HEK293 (cell line): ENCODE measurements at regions of chr10 and their contacts with region 1.

Region 1: DNA sequence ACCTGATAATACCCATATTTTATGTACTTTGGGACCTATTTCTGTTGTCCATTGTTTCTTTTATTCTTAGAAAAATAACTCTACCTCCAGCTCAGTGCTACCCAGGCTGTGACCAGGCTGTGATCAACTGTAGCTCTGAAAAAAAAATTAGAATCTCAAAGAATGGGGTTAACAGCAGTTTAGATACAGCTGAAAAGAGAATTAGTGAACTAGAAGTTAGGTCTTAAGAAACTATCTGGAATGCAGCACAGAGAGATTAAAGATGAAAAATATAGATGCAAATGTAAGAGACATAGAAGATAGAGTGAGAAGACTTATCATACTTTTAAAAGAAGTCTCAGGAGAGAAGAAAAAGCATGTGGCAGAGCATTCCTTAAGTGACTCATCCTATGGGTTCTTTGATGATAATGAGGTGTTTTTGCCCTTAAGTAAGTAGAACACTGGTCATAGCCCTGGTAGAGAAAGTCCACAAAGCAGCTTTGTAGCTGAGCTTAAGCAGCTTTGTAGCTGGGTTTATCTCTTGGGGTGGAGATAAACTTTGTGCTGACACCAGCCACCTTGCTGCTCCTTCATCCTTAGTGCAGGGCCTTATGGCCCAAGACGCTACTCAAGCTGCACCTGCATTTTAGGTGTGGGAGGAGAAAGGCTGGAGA is 27.3 kb upstream of the SFRP5 start:
- H3K4me3 ChIP-seq: no peak overlapping the region
- H3K27ac ChIP-seq: no peak overlapping the region
- H3K4me1 ChIP-seq: no peaks in the 10 kb centered on the region
- CTCF ChIP-seq: no peak

Region 2: GRCh38 chr10:97686962-97687784 is 111.9 kb before region 1 on chr10 and contains the start of gene AVPI1:
- CTCF ChIA-PET with region 1: no interaction called
- POLR2A ChIA-PET with region 1: no interaction called
- H3K4me3 ChIP-seq: peak within 1 kb of the TSS; percentile 71
- H3K27ac ChIP-seq: peak within 1 kb of the TSS; percentile 63; the same call in 1 of the 2 replicates
- H3K4me1 ChIP-seq: peaks cover 10% of the 10 kb centered on the region; the same call in 1 of the 2 replicates
- CTCF ChIP-seq: no peak

Region 3: DNA sequence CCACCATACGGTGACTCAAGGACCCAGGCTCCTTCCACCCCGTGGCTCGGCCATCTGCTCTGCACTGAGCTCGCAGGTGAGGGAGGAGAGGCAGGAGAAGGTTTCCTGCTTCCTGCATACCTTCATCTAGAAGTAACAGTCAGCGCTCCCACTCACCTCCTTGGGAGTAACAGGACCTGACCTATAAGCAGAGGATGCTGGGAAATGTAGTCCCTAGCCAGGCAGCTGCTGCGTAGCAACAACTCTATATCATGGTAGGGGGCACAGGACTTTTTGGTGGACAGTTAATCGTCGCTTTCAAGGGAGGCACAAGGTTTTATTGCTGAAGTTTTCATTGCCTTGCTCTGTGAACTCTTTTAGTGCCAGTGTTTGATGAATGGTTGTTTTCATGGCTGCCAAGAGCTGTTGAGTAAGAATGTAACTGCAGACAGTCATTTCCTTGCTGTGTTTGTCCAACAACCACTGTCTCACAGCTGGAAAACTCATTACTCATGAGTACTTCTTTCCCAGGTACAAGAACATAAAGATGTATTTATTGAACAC is 72.4 kb before region 1 on chr10:
- CTCF ChIA-PET with region 1: no interaction called
- POLR2A ChIA-PET with region 1: no interaction called
- H3K4me3 ChIP-seq: no peak overlapping the region
- H3K27ac ChIP-seq: no peak overlapping the region
- H3K4me1 ChIP-seq: no peaks in the 10 kb centered on the region
- CTCF ChIP-seq: no peak

Region 4: DNA sequence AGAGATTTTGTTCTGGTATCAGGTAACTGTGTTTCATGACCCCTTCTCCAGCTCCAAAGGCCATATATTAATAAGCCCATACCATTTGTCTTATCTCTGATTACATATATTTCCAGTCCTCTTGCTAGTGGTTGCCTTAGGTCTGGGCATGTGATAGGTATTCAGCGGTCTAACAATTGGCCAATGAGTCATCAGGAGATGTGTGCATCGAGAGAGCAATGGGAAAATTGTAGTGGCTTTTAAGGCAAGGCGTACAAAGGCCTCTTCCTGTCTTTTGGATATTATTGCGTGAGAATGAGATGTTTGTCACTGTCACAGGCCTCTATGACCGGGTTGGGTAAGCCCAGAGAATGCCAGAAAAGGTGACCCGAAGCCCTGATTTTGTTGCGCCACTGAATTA is 11.4 kb after region 1 on chr10:
- CTCF ChIA-PET with region 1: interaction called, 10 read pairs
- POLR2A ChIA-PET with region 1: no interaction called
- H3K4me3 ChIP-seq: no peak overlapping the region
- H3K27ac ChIP-seq: no peak overlapping the region
- H3K4me1 ChIP-seq: no peaks in the 10 kb centered on the region
- CTCF ChIP-seq: no peak